Activated naive CD4-positive, alpha-beta T cell treated with anti-CD3 and anti-CD28 coated beads for 36 hours (primary cell): ENCODE measurements at regions of chr9 and their contacts with region 1.

Region 1: DNA sequence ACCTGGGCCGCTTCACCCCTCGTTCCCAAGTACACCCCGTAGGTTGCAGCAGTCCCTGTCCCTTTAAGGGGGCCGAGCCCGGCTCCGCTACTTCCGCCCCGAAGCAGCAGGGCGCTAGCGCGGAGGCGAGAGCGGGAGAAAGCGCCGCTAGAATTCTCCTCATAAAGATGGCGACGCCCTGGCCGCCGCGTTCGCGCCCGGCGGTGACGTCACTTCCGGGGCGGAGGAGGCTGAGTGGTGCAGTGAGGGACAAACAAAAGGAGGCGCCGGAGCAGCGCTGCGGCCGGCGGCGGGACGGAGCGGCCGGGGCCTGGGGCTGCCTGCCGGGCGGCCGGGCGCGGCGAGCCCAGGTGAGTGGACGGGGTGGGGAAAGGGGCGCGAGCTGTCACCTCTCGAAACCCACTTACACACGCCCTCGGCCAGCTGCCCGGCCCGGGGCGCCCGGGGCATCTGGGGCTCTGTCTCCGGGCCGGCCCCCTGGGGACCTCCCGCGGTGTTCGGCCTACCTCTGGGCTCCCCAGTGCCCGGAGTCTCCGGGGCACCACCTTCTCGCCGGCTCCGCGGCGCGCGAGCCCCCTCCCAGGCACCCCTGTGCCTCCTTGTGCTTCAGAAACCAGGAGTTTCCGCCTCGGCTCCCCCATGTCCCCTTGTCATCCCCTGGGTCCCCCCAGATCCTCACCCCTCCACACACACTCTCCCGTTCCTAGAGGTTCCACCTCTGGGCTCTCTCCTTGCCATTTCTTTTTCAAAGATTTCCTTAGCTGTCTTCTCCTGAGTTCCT is at the starts of genes KYAT1 and LRRC8A:
- DNase-seq: peak; percentile 98
- H3K4me3 Mint-ChIP-seq: peak within 1 kb of the TSS; percentile 96
- H3K27ac Mint-ChIP-seq: peak within 1 kb of the TSS; percentile 94
- H3K4me1 Mint-ChIP-seq: peaks cover 50% of the 10 kb centered on the region
- H3K27me3 Mint-ChIP-seq: no peaks in the 10 kb centered on the region
- total RNA-seq, gene KYAT1: 29.6 to 33.6 TPM
- total RNA-seq, gene LRRC8A: 13.1 to 13.2 TPM

Region 2: DNA sequence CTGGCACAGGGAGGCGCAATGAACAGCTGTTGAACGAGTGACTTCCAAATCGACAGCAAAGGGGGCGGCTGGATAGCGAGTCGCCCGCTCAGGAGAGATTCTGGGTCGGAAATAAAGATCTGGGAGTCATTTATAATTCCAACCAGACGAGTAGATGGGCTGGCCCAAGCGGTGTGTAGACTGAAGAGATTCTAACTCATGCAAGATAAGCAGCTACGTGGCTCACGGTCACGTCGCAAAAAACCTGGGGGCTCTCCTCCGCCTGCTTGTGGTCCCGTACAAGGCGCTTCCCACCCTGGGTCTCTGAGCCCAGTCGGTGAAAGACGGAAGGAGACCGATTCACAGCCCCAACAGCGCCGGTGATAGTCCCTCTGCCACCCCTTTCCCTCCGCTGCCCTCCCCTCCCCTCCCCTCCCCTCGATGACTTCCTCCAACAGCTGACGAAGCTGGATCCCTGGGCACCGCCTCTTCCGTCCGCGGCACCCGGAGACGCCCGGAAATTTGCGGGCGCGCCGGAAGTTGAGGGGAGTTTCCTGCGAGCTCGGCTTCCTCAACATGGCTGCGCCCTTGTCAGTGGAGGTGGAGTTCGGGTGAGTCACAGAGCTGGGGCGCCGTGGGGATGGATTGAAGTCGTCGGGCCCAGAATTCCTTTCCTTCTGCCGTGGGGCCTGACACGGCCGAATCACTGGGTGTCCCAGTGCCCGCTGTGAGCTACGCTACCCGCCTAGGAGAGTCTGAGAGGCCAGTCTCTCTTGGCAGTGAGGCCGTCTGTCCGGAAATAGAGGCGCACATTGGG is 511.1 kb before region 1 on chr9 and contains the start of gene URM1:
- CTCF ChIA-PET with region 1: no interaction called
- intact Hi-C with region 1: no loop called
- DNase-seq: peak; percentile 97
- H3K4me3 Mint-ChIP-seq: peak within 1 kb of the TSS; percentile 92
- H3K27ac Mint-ChIP-seq: peak within 1 kb of the TSS; percentile 92
- H3K4me1 Mint-ChIP-seq: peaks cover 28% of the 10 kb centered on the region
- H3K27me3 Mint-ChIP-seq: no peaks in the 10 kb centered on the region
- total RNA-seq, gene URM1: 44.4 to 45.2 TPM

Region 3: DNA sequence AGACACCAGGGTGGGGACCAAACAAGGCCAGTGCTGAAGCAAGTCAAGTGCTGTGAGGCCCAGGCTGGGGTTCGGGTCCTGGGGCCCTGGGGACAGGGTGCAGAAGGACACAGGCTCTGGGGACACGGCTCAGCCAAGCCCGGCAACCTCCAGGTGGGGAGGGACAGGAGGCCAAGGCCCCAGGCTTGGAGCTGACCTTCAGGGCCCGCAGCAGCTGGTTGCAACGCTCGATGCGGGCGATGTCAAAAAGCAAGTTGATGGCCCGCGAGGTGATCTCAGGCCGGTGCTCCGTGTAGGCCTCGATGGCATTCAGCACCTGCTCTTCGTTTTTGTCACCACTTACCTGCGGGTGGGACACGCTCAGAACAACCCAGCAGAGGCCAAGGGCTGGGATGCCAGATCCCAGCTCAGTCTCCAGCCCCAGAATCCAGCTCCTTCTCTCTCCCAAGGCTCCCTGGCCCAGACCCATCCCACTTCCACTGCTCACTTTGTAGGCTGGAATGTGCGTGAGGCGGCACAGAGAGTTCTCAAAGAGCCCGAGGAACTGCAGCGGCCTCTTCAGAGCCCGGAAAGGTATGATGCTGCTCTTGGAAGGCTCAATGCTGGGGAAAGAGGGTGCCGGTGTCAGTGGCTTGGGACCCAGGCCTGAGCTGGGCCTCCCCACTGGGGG is 131.0 kb before region 1 on chr9:
- CTCF ChIA-PET with region 1: no interaction called
- intact Hi-C with region 1: no loop called
- DNase-seq: no peak
- H3K4me3 Mint-ChIP-seq: no peak overlapping the region
- H3K27ac Mint-ChIP-seq: no peak overlapping the region
- H3K4me1 Mint-ChIP-seq: no peaks in the 10 kb centered on the region
- H3K27me3 Mint-ChIP-seq: no peaks in the 10 kb centered on the region

Region 4: GRCh38 chr9:128829477-128830251 is 52.4 kb before region 1 on chr9 and contains the start of gene SPOUT1:
- CTCF ChIA-PET with region 1: no interaction called
- intact Hi-C with region 1: loop called (anchors 1 kb)
- DNase-seq: peak; percentile 95
- H3K4me3 Mint-ChIP-seq: peak within 1 kb of the TSS; percentile 92
- H3K27ac Mint-ChIP-seq: peak within 1 kb of the TSS; percentile 86
- H3K4me1 Mint-ChIP-seq: peaks cover 18% of the 10 kb centered on the region
- H3K27me3 Mint-ChIP-seq: no peaks in the 10 kb centered on the region
- total RNA-seq, gene SPOUT1: 72.9 to 82.3 TPM

Region 5: GRCh38 chr9:128863647-128864046 is 18.4 kb before region 1 on chr9:
- CTCF ChIA-PET with region 1: interaction called, 15 read pairs
- intact Hi-C with region 1: no loop called
- DNase-seq: peak; percentile 90
- H3K4me3 Mint-ChIP-seq: no peak overlapping the region
- H3K27ac Mint-ChIP-seq: no peak overlapping the region
- H3K4me1 Mint-ChIP-seq: peaks cover 9% of the 10 kb centered on the region
- H3K27me3 Mint-ChIP-seq: no peaks in the 10 kb centered on the region

Region 6: GRCh38 chr9:128902351-128903078 is 20.4 kb after region 1 on chr9:
- CTCF ChIA-PET with region 1: interaction called, 5 read pairs
- intact Hi-C with region 1: loop called (anchors 1 kb)
- DNase-seq: peak; percentile 95
- H3K4me3 Mint-ChIP-seq: peak overlapping the region; percentile 27
- H3K27ac Mint-ChIP-seq: peak overlapping the region; percentile 75
- H3K4me1 Mint-ChIP-seq: peaks cover 70% of the 10 kb centered on the region
- H3K27me3 Mint-ChIP-seq: no peaks in the 10 kb centered on the region

Region 7: DNA sequence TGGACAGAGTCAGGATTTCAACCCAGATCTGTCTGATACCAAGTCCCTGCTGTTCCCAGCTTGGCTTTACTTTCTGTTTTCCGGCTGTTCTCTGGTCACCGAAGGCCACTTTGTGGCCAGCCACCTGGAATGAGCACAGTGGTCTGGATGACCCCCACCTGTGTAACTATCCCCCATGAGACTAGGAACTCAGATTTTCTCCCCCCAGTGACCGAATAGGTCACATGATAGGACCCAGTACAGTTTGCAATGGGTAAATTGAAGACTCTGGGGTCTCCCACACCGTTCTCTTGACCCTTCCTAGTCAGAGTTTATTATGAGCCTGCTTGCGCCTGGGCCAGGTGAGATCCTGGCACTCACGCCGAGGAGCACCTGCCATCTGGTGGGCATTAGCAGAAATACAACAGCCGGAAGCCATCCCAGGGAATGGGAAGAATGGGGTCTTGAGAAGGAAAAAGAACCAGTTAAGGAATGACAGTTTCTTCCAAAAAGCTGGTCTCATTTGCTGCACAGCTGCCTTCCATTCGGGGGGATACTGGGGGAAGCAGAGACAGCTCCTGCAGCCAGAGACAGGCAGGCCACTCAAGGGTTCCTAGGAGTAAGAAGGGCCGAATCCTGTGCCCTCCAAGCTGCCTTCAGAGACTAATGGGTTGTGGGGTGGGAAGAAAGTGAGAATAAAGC is 45.8 kb after region 1 on chr9:
- CTCF ChIA-PET with region 1: interaction called, 27 read pairs
- intact Hi-C with region 1: loop called (anchors 1 kb)
- DNase-seq: peak; percentile 68
- H3K4me3 Mint-ChIP-seq: no peak overlapping the region
- H3K27ac Mint-ChIP-seq: no peak overlapping the region
- H3K4me1 Mint-ChIP-seq: peaks cover 10% of the 10 kb centered on the region
- H3K27me3 Mint-ChIP-seq: no peaks in the 10 kb centered on the region

Region 8: DNA sequence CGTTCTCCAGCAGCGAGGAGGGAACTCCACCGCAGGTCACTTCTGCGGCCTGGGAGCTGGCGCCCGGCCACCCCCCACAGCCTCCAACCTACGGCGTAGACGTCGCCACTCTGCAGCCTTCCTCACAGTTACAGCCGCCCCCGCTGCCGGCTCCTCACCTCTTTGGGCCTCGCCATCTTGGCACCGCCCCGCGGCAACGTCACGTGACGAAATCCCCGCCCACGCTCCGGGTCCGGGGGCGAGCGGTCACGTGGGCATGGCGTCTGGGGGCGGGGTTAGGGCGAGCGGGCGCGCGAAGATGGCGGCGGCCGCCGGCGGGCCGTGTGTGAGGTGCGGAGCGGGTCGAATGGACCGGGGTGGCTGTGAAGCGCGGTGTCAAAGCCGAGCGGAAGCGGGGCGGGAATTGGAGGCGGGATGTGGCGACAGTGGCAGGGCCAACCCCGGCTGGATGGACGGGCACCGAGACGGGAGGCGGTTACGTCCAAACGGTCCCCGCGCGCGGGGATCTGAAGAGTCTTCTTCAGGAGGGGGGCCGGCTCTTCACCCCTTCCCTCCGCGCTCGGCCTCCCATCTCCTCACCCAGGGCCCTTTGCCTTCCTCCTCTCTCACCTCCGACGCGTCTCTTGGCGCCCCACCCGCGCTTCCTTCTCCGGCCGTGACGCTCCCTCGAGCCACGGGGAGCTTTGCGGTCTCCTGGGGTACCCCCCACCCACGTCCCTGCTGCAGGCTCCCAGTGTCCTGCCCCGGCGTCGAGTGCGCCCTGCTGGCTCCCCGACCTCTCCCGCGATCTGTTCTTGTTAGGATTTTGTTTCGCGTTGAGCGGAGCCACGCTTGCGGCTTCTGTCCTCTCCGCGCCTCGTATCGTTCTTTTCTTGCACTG is 65.6 kb after region 1 on chr9 and contains the starts of genes DOLK and NUP188:
- CTCF ChIA-PET with region 1: no interaction called
- intact Hi-C with region 1: loop called (anchors 1 kb)
- DNase-seq: peak; percentile 98
- H3K4me3 Mint-ChIP-seq: peak within 1 kb of the TSS; percentile 97
- H3K27ac Mint-ChIP-seq: peak within 1 kb of the TSS; percentile 94
- H3K4me1 Mint-ChIP-seq: peaks cover 33% of the 10 kb centered on the region
- H3K27me3 Mint-ChIP-seq: no peaks in the 10 kb centered on the region
- total RNA-seq, gene DOLK: 2.5 to 2.7 TPM
- total RNA-seq, gene NUP188: 101 to 112 TPM

Region 9: DNA sequence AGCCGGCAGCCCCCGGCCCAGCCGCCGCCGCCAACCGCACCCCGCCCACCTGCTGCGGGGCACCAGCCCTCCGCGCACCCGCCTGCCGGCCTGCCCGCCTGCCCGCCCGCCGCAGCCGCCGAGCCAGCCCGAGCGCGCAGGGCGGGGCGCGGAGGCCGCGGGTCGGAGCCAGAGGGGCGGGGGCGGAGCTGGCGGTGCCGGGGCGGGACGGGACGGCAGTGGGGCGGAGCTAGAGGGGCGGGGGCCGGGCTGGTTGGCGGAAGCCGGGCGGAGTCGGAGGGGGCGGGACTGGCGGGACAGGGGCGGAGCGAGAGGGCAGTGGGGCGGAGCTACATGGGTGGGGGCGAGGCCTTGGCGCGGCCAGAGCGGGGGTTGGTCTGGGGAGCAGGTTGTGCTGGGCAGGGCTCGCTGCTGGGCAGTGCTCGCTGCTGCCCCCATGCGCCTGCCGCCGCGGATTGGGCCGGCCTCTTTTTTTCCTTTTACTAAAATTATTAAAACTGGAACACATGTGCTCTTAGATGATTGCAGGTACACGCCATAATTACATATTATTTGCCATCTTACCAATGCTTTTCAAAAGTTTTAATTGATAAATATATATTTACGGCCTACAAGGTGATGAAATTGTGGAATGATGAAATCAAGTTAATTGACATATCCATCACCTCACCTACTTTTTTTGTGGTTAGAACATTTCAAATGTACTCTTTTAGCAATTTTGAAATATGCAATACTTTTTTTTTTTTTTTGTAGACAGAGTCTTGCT is 146.3 kb after region 1 on chr9 and contains the start of gene SH3GLB2:
- CTCF ChIA-PET with region 1: no interaction called
- intact Hi-C with region 1: loop called (anchors 5 kb)
- DNase-seq: peak; percentile 95
- H3K4me3 Mint-ChIP-seq: peak within 1 kb of the TSS; percentile 84
- H3K27ac Mint-ChIP-seq: no peak within 1 kb of the TSS
- H3K4me1 Mint-ChIP-seq: peaks cover 13% of the 10 kb centered on the region
- H3K27me3 Mint-ChIP-seq: no peaks in the 10 kb centered on the region
- total RNA-seq, gene SH3GLB2: 38.0 to 38.2 TPM